ENCODE measurements at regions of chr12 and their contacts with region 1.

Region 1: DNA sequence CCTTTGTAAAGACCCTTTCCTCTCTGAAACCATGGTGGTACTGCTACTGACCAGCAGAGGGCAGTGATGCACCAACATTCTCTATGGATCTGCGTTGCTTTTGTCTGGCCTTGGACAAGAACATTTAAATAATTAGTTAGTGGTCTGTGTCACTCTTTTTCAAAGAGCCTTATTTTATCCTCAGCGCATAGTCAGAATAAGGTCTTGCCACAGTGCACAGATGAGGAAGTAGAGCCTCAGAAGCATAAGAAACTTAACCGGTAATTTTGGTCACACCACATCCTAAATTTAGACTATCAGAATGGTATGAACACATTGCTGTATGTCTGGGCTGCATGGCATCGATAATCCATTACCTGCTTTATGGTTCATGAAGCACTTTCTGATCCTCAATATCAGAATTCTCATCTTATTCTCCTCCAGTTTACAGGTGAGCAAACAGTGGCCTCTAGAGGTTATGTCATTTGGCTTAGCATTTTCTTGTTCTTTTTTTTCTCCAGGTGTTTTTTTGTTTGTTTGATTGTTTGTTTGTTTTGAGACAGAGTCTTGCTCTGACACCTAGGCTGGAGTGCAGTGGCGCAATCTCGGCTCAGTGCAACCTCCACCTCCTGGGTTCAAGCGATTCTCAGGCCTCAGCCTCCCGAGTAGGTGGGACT is 23.7 kb upstream of the IFT81 start:
- DNase-seq: peak; percentile 41
- ATAC-seq: peak; percentile 96
- H3K4me3 Mint-ChIP-seq: peak overlapping the region; percentile 50
- H3K27ac Mint-ChIP-seq: peak overlapping the region; percentile 80
- H3K4me1 Mint-ChIP-seq: peaks cover 23% of the 10 kb centered on the region
- H3K27me3 Mint-ChIP-seq: no peaks in the 10 kb centered on the region
- CTCF ChIP-seq: peak; percentile 55

Region 2: GRCh38 chr12:110048242-110049027 is 52.0 kb before region 1 on chr12 and contains the start of gene C12orf76:
- CTCF ChIA-PET with region 1: no interaction called
- POLR2A ChIA-PET with region 1: no interaction called
- intact Hi-C with region 1: loop called (anchors 2 kb)
- DNase-seq: peak; percentile 80
- ATAC-seq: peak; percentile 96
- H3K4me3 Mint-ChIP-seq: peak within 1 kb of the TSS; percentile 95
- H3K27ac Mint-ChIP-seq: peak within 1 kb of the TSS; percentile 100
- H3K4me1 Mint-ChIP-seq: peaks cover 52% of the 10 kb centered on the region
- H3K27me3 Mint-ChIP-seq: no peaks in the 10 kb centered on the region
- CTCF ChIP-seq: no peak
- total RNA-seq, gene C12orf76: 20.5 and 24.8 TPM in 2 replicates

Region 3: GRCh38 chr12:110124184-110124995 is 23.9 kb after region 1 on chr12 and contains the start of gene IFT81:
- CTCF ChIA-PET with region 1: no interaction called
- POLR2A ChIA-PET with region 1: no interaction called
- intact Hi-C with region 1: loop called (anchors 1 kb)
- DNase-seq: peak; percentile 95
- ATAC-seq: peak; percentile 91
- H3K4me3 Mint-ChIP-seq: peak within 1 kb of the TSS; percentile 92
- H3K27ac Mint-ChIP-seq: peak within 1 kb of the TSS; percentile 79
- H3K4me1 Mint-ChIP-seq: peaks cover 8% of the 10 kb centered on the region
- H3K27me3 Mint-ChIP-seq: no peaks in the 10 kb centered on the region
- CTCF ChIP-seq: no peak
- total RNA-seq, gene IFT81: 4.3 and 4.4 TPM in 2 replicates

Region 4: GRCh38 chr12:110338754-110339153 is 238.3 kb after region 1 on chr12:
- CTCF ChIA-PET with region 1: no interaction called
- POLR2A ChIA-PET with region 1: no interaction called
- intact Hi-C with region 1: loop called (anchors 1 kb)
- DNase-seq: no peak
- ATAC-seq: peak; percentile 79
- H3K4me3 Mint-ChIP-seq: no peak overlapping the region
- H3K27ac Mint-ChIP-seq: no peak overlapping the region
- H3K4me1 Mint-ChIP-seq: peaks cover 16% of the 10 kb centered on the region
- H3K27me3 Mint-ChIP-seq: no peaks in the 10 kb centered on the region
- CTCF ChIP-seq: no peak

Region 5: GRCh38 chr12:110431957-110432587 is 331.6 kb after region 1 on chr12:
- CTCF ChIA-PET with region 1: interaction called, 25 read pairs
- POLR2A ChIA-PET with region 1: interaction called, 16 read pairs
- intact Hi-C with region 1: loop called (anchors 1 kb)
- DNase-seq: no peak
- ATAC-seq: no peak
- H3K4me3 Mint-ChIP-seq: no peak overlapping the region
- H3K27ac Mint-ChIP-seq: no peak overlapping the region
- H3K4me1 Mint-ChIP-seq: peaks cover 2% of the 10 kb centered on the region
- H3K27me3 Mint-ChIP-seq: no peaks in the 10 kb centered on the region
- CTCF ChIP-seq: no peak

Region 6: DNA sequence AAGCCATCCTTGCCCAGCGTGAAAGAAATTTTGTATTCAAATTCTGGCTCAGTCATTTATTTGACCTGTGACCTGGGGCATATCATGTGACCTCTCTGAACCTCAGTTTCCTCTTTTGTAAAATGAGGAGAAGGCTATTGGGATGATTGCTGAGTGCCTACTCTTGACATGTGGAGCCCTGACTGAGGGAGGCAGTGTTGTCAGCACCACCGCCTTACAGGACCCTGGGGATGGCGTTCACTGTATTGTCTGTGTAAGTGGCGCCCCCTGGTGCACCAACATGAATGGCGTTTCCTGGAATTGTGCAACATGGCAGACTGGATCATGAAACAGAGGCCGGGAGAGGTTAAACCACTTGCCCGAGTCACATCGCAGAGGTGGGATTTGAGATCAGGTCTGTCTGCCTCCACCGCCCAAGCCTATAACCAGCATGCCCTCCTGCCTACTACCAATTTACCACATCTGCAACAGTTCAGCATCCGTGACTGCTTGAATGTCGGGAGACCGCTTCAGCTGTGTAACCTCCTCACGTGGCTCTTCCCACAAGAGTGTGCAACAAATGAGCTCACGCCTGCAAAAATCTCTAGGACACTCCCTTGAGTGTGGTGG is 726.3 kb after region 1 on chr12:
- CTCF ChIA-PET with region 1: no interaction called
- POLR2A ChIA-PET with region 1: no interaction called
- intact Hi-C with region 1: loop called (anchors 1 kb)
- DNase-seq: peak; percentile 74
- ATAC-seq: peak; percentile 99
- H3K4me3 Mint-ChIP-seq: peak overlapping the region; percentile 80
- H3K27ac Mint-ChIP-seq: peak overlapping the region; percentile 41
- H3K4me1 Mint-ChIP-seq: peaks cover 6% of the 10 kb centered on the region
- H3K27me3 Mint-ChIP-seq: peaks cover 4% of the 10 kb centered on the region
- CTCF ChIP-seq: no peak